Dendritic cell treated with granulocyte-macrophage colony-stimulating factor and Interleukin-4, amounts not matched to agents 40 ng/mL and 50 ng/mL, for 4 days (primary cell): ENCODE measurements at regions of chr16 and their contacts with region 1.

Region 1: GRCh38 chr16:28950648-28951409 is at the start of gene NFATC2IP:
- H3K4me3 Mint-ChIP-seq: peak within 1 kb of the TSS; percentile 89
- H3K27ac Mint-ChIP-seq: peak within 1 kb of the TSS; percentile 86
- H3K4me1 Mint-ChIP-seq: peaks cover 36% of the 10 kb centered on the region
- H3K27me3 Mint-ChIP-seq: peaks cover 6% of the 10 kb centered on the region

Region 2: DNA sequence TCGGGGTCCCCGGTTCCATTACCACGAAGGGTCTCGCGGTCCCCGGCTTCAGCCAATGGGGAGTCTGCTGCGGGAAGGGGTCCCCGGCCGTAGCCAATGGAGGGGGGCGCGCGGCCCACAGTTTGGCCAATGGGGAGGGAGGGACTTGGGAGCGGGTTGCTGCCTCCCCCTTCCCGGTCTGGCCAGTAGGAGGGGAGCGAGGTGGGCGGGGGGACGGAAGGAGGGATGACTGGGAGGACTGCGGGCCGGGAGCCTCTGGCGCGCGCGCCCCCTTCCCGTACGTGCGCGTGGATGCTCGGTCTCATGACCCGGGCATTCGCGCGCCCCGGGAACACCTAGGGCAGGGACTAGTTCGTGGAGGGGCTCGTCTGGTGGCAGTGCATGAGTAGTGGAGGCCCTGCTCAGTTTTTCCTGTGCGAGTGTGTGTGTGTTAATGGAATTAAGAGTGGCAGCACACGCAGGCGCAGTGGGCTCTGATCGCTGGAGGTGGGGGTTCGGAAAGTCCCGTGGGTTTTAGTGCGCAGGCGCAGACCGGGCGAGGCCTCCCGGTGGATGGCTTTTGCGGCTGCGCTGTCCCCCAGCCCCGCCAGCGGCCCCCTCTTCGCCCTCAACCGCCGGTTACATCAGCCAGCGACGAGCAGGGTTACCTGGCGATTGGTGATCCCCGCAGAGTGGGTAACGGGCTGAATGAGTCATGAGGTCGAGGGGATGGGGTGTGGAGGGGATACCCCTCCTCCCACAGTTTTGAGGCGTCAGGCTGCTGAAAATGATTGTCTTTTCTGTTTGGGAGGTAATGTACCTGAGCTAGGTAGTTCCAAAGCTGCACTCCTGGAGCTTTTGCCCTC is 126.7 kb before region 1 on chr16:
- intact Hi-C with region 1: loop called (anchors 2 kb)
- H3K4me3 Mint-ChIP-seq: peak overlapping the region; percentile 97
- H3K27ac Mint-ChIP-seq: peak overlapping the region; percentile 94
- H3K4me1 Mint-ChIP-seq: peaks cover 45% of the 10 kb centered on the region
- H3K27me3 Mint-ChIP-seq: no peaks in the 10 kb centered on the region

Region 3: GRCh38 chr16:28846080-28846932 is 104.5 kb before region 1 on chr16 and contains the start of gene TUFM:
- intact Hi-C with region 1: loop called (anchors 1 kb)
- H3K4me3 Mint-ChIP-seq: peak within 1 kb of the TSS; percentile 96
- H3K27ac Mint-ChIP-seq: peak within 1 kb of the TSS; percentile 96
- H3K4me1 Mint-ChIP-seq: peaks cover 30% of the 10 kb centered on the region
- H3K27me3 Mint-ChIP-seq: no peaks in the 10 kb centered on the region

Region 4: GRCh38 chr16:28873536-28874201 is 77.2 kb before region 1 on chr16:
- intact Hi-C with region 1: loop called (anchors 5 kb)
- H3K4me3 Mint-ChIP-seq: no peak overlapping the region
- H3K27ac Mint-ChIP-seq: no peak overlapping the region
- H3K4me1 Mint-ChIP-seq: peaks cover 15% of the 10 kb centered on the region
- H3K27me3 Mint-ChIP-seq: peaks cover 11% of the 10 kb centered on the region

Region 5: DNA sequence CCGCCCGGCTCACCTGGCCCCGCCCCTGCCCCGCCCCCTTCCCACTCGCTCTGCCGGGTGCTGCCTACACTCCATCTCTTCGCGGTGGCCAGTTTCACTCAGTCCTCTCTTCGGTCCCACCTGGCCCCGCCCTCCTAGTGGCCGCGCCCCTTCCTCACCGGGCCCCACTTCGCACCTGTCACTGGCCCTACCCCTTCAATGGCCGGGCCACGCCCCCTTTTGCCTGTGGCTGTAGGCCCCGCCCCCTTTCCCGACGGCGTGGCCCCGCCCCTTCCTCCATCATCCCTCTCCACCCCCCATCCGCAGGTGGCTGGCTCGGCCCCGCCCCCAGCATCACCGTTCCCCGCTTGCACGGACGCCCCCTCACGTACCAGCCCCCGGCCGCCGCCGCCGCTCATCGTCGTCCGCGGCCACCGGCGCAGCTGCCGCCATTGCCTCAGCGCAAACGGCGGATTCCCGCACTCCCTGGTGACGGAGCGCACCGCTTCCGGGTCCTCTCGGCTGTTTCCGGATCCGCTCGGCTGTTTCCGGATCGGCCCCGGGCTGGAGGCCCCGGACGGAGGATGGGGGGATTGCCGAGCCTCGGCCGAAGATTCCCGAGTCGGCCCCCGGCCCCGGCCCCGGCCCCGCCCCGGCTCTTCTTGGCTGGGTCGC is 26.0 kb before region 1 on chr16 and contains the start of gene RABEP2:
- intact Hi-C with region 1: loop called (anchors 1 kb)
- H3K4me3 Mint-ChIP-seq: peak within 1 kb of the TSS; percentile 89
- H3K27ac Mint-ChIP-seq: peak within 1 kb of the TSS; percentile 96
- H3K4me1 Mint-ChIP-seq: peaks cover 34% of the 10 kb centered on the region
- H3K27me3 Mint-ChIP-seq: no peaks in the 10 kb centered on the region

Region 6: GRCh38 chr16:28974437-28975157 is 23.8 kb after region 1 on chr16 and contains the start of gene SPNS1:
- intact Hi-C with region 1: loop called (anchors 1 kb)
- H3K4me3 Mint-ChIP-seq: peak within 1 kb of the TSS; percentile 88
- H3K27ac Mint-ChIP-seq: peak within 1 kb of the TSS; percentile 94
- H3K4me1 Mint-ChIP-seq: peaks cover 40% of the 10 kb centered on the region
- H3K27me3 Mint-ChIP-seq: no peaks in the 10 kb centered on the region